Heart right ventricle (tissue), 16 donors: ENCODE measurements at regions of chr2 and their contacts with region 1.

Region 1: GRCh38 chr2:217510771-217511291 is 492.0 kb downstream of the TNS1 start:
- DNase-seq: peak; percentile 9 to 79
- ATAC-seq: peak; percentile 87 to 94 (median 93)
- H3K4me3 ChIP-seq: peak overlapping the region in 1 of 10 donors; percentile 11
- H3K27ac ChIP-seq: peak overlapping the region in 2 of 10 donors; percentile 30 to 35
- H3K4me1 ChIP-seq: peaks cover 0 to 26% (median 8%) of the 10 kb centered on the region in 9 donors
- H3K27me3 ChIP-seq: no peaks in the 10 kb centered on the region
- CTCF ChIP-seq: peak; percentile 62 to 89 (median 68)

Region 2: DNA sequence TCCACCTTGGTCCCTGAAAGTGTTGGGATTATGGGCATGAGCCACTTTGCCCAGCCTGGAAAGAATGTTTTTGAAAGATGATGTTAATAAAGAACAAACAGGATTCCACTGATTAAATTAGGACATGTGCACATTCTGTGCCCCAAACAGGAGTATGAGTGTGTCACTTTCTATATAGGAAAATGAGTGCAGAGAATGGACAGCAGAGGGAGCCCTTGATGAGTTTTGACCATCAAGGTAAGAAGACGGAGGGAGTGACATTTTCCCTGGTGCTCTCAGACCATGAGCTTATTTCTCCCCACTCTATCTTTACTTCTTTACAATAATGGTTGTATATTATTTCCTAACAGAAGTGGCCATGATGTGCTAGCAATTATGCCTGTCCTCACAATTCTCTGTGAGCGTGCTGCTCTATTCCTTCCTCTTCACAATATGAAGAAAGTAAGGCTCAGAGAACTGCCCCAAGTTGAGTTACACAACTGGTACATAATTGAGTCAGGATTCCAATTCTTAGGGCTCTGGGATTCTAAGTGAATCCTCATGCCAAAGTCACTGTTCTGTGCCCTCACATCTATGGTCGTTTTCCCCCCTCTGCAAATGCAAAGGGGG is 991.6 kb before region 1 on chr2:
- intact Hi-C with region 1: loop called in 5 of 10 experiments (anchors 5 to 10 kb)
- DNase-seq: peak in 1 of 2 donors; percentile 86
- ATAC-seq: peak; percentile 63 to 89 (median 87)
- H3K4me3 ChIP-seq: no peak overlapping the region
- H3K27ac ChIP-seq: no peak overlapping the region
- H3K4me1 ChIP-seq: peaks cover 0 to 10% (median 5%) of the 10 kb centered on the region in 9 donors
- H3K27me3 ChIP-seq: no peaks in the 10 kb centered on the region
- CTCF ChIP-seq: peak; percentile 69 to 91 (median 81)

Region 3: GRCh38 chr2:216698895-216699294 is 811.9 kb before region 1 on chr2:
- intact Hi-C with region 1: loop called in 9 of 10 experiments (anchors 2 to 5 kb)
- DNase-seq: peak in 1 of 2 donors; percentile 47
- ATAC-seq: peak in 7 of 8 donors; percentile 30 to 63 (median 48)
- H3K4me3 ChIP-seq: no peak overlapping the region
- H3K27ac ChIP-seq: peak overlapping the region in 6 of 10 donors; percentile 15 to 67 (median 38)
- H3K4me1 ChIP-seq: peaks cover 10 to 80% (median 48%) of the 10 kb centered on the region in 9 donors
- H3K27me3 ChIP-seq: peaks cover 0 to 71% (median 0%) of the 10 kb centered on the region in 7 donors
- CTCF ChIP-seq: peak; percentile 43 to 83 (median 67)

Region 4: GRCh38 chr2:217064234-217065024 is 446.4 kb before region 1 on chr2:
- intact Hi-C with region 1: loop called in 1 of 10 experiments (anchors 10 kb)
- DNase-seq: peak in 1 of 2 donors; percentile 45
- ATAC-seq: peak; percentile 60 to 95 (median 83)
- H3K4me3 ChIP-seq: peak overlapping the region in 4 of 10 donors; percentile 18 to 25 (median 22)
- H3K27ac ChIP-seq: peak overlapping the region in 9 of 10 donors; percentile 10 to 74 (median 61)
- H3K4me1 ChIP-seq: peaks cover 0 to 20% (median 11%) of the 10 kb centered on the region in 9 donors
- H3K27me3 ChIP-seq: no peaks in the 10 kb centered on the region
- CTCF ChIP-seq: no peak

Region 5: GRCh38 chr2:217177720-217178119 is 333.1 kb before region 1 on chr2:
- intact Hi-C with region 1: loop called in 2 of 10 experiments (anchors 10 kb)
- DNase-seq: no peak
- ATAC-seq: no peak
- H3K4me3 ChIP-seq: no peak overlapping the region
- H3K27ac ChIP-seq: no peak overlapping the region
- H3K4me1 ChIP-seq: peaks cover 0 to 2% (median 0%) of the 10 kb centered on the region in 9 donors
- H3K27me3 ChIP-seq: peaks cover 0 to 40% (median 0%) of the 10 kb centered on the region in 7 donors
- CTCF ChIP-seq: no peak

Region 6: GRCh38 chr2:217440000-217440399 is 70.8 kb before region 1 on chr2:
- intact Hi-C with region 1: loop called in 1 of 10 experiments (anchors 1 kb)
- DNase-seq: no peak
- ATAC-seq: no peak
- H3K4me3 ChIP-seq: no peak overlapping the region
- H3K27ac ChIP-seq: no peak overlapping the region
- H3K4me1 ChIP-seq: peaks cover 0 to 36% (median 22%) of the 10 kb centered on the region in 9 donors
- H3K27me3 ChIP-seq: no peaks in the 10 kb centered on the region
- CTCF ChIP-seq: no peak

Region 7: GRCh38 chr2:217756375-217757107 is 245.7 kb after region 1 on chr2:
- intact Hi-C with region 1: loop called in 2 of 10 experiments (anchors 5 to 10 kb)
- DNase-seq: peak; percentile 72 to 78
- ATAC-seq: peak; percentile 75 to 91 (median 88)
- H3K4me3 ChIP-seq: peak overlapping the region in 6 of 10 donors; percentile 9 to 40 (median 31)
- H3K27ac ChIP-seq: no peak overlapping the region
- H3K4me1 ChIP-seq: peaks cover 5 to 22% (median 10%) of the 10 kb centered on the region in 9 donors
- H3K27me3 ChIP-seq: peaks cover 0 to 8% (median 0%) of the 10 kb centered on the region in 7 donors
- CTCF ChIP-seq: peak; percentile 90 to 99 (median 94)